OCI-LY7 (cell line): ENCODE measurements at regions of chr13 and their contacts with region 1.

Region 1: GRCh38 chr13:42271337-42272114 is 426 bp upstream of the AKAP11 start:
- DNase-seq: peak; percentile 98
- H3K4me3 ChIP-seq: peak overlapping the region; percentile 82
- H3K27ac ChIP-seq: peak overlapping the region; percentile 75
- H3K4me1 ChIP-seq: peaks cover 36% of the 10 kb centered on the region
- CTCF ChIP-seq: no peak

Region 2: GRCh38 chr13:41465241-41465847 is 806.2 kb before region 1 on chr13:
- CTCF ChIA-PET with region 1: no interaction called
- POLR2A ChIA-PET with region 1: interaction called, 4 read pairs
- intact Hi-C with region 1: loop called (anchors 10 kb)
- DNase-seq: peak; percentile 94
- H3K4me3 ChIP-seq: peak overlapping the region; percentile 85
- H3K27ac ChIP-seq: peak overlapping the region; percentile 95
- H3K4me1 ChIP-seq: peaks cover 71% of the 10 kb centered on the region
- CTCF ChIP-seq: no peak

Region 3: DNA sequence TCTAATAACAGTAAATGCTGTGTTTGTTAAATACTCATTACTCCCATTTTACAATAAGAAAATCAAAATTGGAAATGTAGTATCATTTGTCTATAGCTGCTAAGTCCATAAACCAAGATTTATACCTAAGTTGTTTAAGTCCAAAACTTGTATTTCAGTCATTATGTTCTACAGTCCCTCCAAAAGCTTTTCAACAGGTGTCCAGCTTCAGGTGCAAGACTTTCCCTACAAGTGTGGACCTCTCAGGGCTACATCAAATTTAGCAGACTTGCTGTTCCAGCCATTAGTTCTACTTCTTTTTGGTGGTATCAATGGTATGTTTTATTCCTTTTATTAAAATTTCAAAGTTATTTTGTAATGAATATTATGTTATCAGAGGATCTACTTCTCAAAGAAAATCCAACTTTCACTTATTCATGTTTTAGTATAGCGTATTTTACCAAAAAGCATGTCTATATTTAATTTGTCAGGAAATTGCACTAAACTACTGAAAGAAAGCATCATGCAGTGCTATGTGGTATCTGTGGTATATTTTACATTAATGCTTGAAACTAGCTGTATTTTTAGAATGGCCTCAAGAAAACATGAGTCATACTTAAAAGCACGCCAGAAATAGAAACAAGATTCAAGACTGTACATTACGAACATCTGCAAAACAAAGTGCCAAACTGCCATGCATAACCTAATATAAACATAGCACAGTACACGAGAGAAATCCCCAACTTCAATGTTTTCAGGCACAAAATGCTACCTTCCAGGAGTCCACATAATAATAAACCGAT is 355.2 kb before region 1 on chr13:
- CTCF ChIA-PET with region 1: no interaction called
- POLR2A ChIA-PET with region 1: no interaction called
- intact Hi-C with region 1: loop called (anchors 10 kb)
- DNase-seq: peak; percentile 94
- H3K4me3 ChIP-seq: peak overlapping the region; percentile 42
- H3K27ac ChIP-seq: peak overlapping the region; percentile 87
- H3K4me1 ChIP-seq: peaks cover 60% of the 10 kb centered on the region
- CTCF ChIP-seq: no peak

Region 4: DNA sequence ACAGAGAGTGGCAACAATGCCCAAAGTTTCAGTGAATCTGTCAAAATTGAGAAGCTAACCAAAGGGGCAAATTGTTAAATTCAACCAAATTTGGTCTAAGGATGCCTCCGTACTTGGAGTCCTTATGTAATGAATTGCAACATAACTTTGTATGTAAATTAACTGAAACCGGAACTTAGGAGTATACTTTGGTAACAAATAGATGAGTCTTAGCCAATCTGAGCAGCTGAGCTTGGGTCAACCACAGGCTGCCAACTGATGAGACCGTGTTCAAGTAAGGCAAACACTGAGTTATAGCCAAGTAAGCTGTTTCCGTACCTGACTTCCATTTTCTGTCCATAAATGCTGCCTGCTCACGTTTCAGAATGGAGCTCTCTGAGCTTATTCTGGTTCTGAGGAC is 315.9 kb before region 1 on chr13:
- CTCF ChIA-PET with region 1: no interaction called
- POLR2A ChIA-PET with region 1: no interaction called
- intact Hi-C with region 1: loop called (anchors 10 kb)
- DNase-seq: no peak
- H3K4me3 ChIP-seq: no peak overlapping the region
- H3K27ac ChIP-seq: no peak overlapping the region
- H3K4me1 ChIP-seq: peaks cover 37% of the 10 kb centered on the region
- CTCF ChIP-seq: no peak

Region 5: DNA sequence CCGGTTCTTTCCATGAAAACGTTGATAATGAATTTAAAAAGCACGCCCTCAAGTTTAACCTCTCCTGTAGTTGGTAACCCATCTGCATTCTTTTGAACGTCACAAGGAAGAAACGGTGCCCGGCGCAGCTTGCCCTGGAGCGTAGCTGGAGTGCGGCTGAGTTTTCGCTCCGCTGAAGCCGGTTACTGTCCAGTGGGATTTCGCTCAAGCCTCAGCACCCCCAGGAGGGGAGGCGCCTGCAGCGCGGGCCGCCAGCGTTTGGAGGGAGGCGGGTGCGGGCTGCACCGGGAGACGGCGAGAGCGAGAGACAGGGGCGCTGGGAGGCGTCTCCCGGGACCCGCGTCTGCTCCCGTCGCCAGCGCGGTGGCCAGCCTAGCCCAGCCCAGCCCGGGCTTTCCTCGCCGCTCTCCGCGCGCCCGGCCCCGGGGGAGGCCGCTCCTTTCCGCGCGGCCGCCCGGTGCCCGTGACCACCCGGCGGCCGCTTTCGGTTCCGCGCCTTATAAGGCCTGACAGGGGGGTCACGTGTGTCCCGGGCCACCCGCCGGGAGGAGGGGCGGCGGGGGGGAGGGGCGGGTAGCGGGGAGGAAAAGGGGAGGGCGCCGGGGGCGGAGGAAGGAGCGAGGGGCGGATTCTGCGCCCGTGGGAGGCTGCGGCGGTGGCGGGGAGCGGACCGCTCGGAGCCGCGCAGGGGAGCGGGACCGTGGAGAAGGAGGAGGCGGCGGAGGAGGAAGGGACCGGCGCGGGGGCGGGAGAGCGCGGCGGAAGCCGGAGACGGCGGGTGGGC is 231.4 kb before region 1 on chr13:
- CTCF ChIA-PET with region 1: no interaction called
- POLR2A ChIA-PET with region 1: no interaction called
- intact Hi-C with region 1: loop called (anchors 5 kb)
- DNase-seq: peak; percentile 92
- H3K4me3 ChIP-seq: peak overlapping the region; percentile 71
- H3K27ac ChIP-seq: peak overlapping the region; percentile 10
- H3K4me1 ChIP-seq: peaks cover 14% of the 10 kb centered on the region
- CTCF ChIP-seq: 0 out of 2 replicates have a peak, but pooled peaks have one; percentile 15

Region 6: DNA sequence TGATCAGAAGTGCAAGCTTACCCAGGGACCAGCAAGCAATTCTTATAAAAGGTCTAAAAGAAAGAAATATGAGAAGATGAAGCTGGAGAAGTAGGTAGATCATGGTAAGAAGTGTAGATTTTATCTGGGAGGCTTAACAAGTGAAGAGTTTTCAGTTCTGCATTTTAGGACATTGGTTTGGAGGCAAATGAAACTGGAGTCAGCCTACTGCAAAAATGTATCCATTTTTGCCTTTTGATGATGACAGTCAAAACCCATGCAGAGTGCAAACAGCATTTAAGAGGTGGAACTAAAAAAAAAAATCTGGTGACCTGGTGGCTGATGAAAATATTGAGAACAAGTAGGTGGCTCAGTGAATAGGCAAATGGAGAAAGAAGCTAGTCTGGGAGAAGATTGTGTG is 968.8 kb after region 1 on chr13:
- CTCF ChIA-PET with region 1: no interaction called
- POLR2A ChIA-PET with region 1: no interaction called
- intact Hi-C with region 1: loop called (anchors 10 kb)
- DNase-seq: peak; percentile 60
- H3K4me3 ChIP-seq: peak overlapping the region; percentile 33
- H3K27ac ChIP-seq: peak overlapping the region; percentile 66
- H3K4me1 ChIP-seq: peaks cover 27% of the 10 kb centered on the region
- CTCF ChIP-seq: no peak